Calu3 (cell line): ENCODE measurements at regions of chr1 and their contacts with region 1.

Region 1: GRCh38 chr1:41468118-41468762 is 16.2 kb downstream of the EDN2 start:
- DNase-seq: peak; percentile 26
- H3K4me3 Mint-ChIP-seq: no peak overlapping the region
- H3K27ac Mint-ChIP-seq: no peak overlapping the region
- H3K4me1 Mint-ChIP-seq: peaks cover 12% of the 10 kb centered on the region
- H3K27me3 Mint-ChIP-seq: no peaks in the 10 kb centered on the region
- CTCF ChIP-seq: no peak

Region 2: DNA sequence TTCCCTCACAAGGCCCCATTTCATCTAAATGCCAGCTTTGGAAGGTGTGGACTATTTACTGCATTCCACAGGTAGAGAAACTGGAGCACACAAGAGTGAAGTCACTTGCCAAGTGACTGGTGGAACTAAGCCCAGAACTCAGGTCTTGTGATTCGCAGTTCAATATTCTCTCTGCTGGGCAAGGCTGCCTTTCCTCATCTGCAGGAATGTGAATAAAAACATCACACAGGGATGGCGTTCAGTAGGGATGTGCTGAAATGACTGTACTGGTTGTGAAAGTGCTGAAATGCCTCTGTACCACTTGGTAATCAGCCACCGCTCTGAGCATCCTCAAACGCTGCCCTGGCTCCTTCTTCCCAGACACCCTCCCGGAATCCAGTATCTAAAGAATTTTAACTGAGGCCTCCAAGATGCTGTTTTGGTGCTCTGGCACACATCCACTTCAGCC is 304.9 kb after region 1 on chr1:
- CTCF ChIA-PET with region 1: interaction called, 11 read pairs
- intact Hi-C with region 1: no loop called
- DNase-seq: peak; percentile 8
- H3K4me3 Mint-ChIP-seq: no peak overlapping the region
- H3K27ac Mint-ChIP-seq: no peak overlapping the region
- H3K4me1 Mint-ChIP-seq: no peaks in the 10 kb centered on the region
- H3K27me3 Mint-ChIP-seq: no peaks in the 10 kb centered on the region
- CTCF ChIP-seq: no peak